ENCODE measurements at regions of chr10 and their contacts with region 1.

Region 1: DNA sequence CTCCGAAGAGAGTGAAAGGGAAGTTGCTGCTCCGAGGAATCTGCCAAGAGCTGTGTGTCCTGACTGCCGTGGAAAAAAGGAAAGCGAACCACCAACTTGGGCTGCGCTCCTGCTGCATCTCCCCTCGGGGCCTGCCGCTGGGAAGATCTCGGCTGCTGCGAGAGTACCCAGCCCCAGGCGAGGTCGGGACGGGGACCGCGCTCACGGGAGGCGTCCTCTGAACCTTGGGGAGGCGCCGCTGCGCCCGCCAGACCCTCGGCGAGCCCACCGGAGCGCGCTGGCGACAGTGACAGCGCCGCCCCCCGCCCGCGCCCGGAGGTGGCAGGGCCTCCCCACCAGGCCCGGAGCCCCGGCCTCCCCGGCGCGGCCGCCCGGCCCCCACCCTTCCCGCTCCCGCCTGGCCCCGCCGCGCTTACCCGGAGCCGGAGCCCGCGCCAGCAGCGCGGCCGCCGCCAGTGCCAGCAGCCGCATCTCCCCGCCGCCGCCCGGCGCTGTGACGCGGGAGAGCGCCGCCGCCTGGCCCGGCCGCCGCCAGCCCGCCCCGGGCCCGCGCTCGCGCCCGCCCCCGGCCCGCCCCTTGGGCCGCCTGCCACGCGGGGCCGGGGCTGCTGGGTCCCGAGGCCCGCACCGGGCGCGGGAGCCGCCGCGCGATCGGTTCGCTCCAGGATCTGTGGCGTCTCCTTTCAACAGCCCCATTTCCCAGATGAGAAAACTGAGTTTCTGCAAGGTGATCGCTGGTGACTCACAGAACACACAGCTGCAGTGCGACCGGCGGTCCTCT is at the start of gene VSTM4:
- DNase-seq: peak; percentile 56 to 81 (median 74)
- H3K4me3 ChIP-seq: peak within 1 kb of the TSS; percentile 66
- H3K27ac ChIP-seq: peak within 1 kb of the TSS; percentile 89 to 90
- H3K4me1 ChIP-seq: peaks cover 27% of the 10 kb centered on the region
- H3K27me3 ChIP-seq: no peaks in the 10 kb centered on the region
- CTCF ChIP-seq: peak in 1 of 3 donors; percentile 15
- EP300 ChIP-seq: no peak
- POLR2A ChIP-seq: no peak
- total RNA-seq, gene VSTM4: 17.3 to 68.9 (median 42.9) TPM

Region 2: DNA sequence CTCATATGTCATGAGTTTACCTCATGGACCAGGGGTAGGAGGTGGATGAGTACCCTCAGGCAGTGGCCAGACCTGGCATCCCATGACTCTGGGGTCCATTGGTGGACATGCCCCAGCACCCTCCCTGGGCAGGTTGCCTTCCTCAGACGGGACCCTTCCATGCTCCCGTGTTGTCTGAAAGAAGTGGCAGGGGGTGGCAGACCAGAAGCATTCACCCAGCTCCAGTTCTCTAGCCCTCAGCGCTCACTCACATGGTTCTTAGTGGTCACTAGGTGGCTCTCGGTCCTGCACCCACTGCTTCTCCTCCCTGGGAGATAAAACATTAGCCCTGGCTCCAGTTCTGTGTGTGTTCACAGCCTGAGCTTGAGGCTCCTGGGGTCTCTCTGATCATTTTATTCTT is 1761.0 kb before region 1 on chr10:
- intact Hi-C with region 1: no loop called
- DNase-seq: no peak
- H3K4me3 ChIP-seq: no peak overlapping the region
- H3K27ac ChIP-seq: no peak overlapping the region
- H3K4me1 ChIP-seq: no peaks in the 10 kb centered on the region
- H3K27me3 ChIP-seq: no peaks in the 10 kb centered on the region
- CTCF ChIP-seq: no peak
- EP300 ChIP-seq: no peak
- POLR2A ChIP-seq: no peak

Region 3: DNA sequence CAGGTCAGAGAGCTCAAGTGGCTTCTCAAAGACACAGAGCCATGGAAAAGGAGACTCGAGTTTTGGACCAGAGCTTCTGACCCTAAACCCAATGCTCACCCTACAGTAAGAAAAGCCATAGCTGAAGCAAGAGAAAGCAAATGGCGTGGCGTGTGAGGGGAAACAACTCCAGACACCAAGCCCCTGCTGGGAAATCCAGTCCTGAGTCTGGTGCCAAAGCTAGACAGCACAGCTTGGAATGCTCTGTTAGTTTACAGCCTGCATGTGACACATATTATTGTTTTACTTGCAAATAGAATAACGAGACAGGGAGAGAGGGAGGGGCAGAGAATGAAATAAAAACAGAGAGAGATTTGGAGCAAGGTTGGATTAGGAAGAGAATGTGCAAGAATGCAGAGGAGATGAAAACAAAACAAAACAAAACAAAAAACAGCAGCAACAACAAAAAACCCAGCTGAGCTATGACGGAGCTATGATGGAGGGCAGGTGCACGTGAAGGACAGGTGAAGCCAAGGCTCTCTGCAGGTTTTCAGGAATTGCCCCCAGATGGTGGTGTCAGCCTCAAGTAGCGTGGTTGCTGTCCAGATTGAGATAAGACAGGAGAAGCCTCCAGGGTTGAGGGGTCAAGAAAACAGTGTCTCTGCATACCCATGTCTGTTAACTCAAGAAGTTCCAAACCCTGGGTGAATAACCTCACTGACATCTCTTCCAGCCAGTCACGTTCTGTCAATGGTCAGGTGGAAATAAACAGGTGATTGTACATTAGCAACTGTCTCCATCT is 105.8 kb before region 1 on chr10:
- intact Hi-C with region 1: loop called in 1 of 4 experiments (anchors 10 kb)
- DNase-seq: no peak
- H3K4me3 ChIP-seq: no peak overlapping the region
- H3K27ac ChIP-seq: no peak overlapping the region
- H3K4me1 ChIP-seq: peaks cover 38% of the 10 kb centered on the region
- H3K27me3 ChIP-seq: no peaks in the 10 kb centered on the region
- CTCF ChIP-seq: no peak
- EP300 ChIP-seq: no peak
- POLR2A ChIP-seq: no peak

Measured in ovary (tissue), 10 donors.